Activated naive CD4-positive, alpha-beta T cell treated with anti-CD3 and anti-CD28 coated beads, Interleukin-2, amount 10 ng/mL, durations not matched to agents 7 days and 5 days (primary cell): ENCODE measurements at regions of chr18 and their contacts with region 1.

Region 1: GRCh38 chr18:9082711-9083510 is 19.6 kb upstream of the NDUFV2 start:
- DNase-seq: peak; percentile 61
- H3K4me3 Mint-ChIP-seq: peak overlapping the region; percentile 73
- H3K27ac Mint-ChIP-seq: peak overlapping the region; percentile 99
- H3K4me1 Mint-ChIP-seq: peaks cover 74% of the 10 kb centered on the region
- H3K27me3 Mint-ChIP-seq: no peaks in the 10 kb centered on the region

Region 2: GRCh38 chr18:9095297-9096006 is 12.5 kb after region 1 on chr18:
- CTCF ChIA-PET with region 1: interaction called, 11 read pairs
- DNase-seq: peak; percentile 74
- H3K4me3 Mint-ChIP-seq: peak overlapping the region; percentile 3
- H3K27ac Mint-ChIP-seq: peak overlapping the region; percentile 90
- H3K4me1 Mint-ChIP-seq: peaks cover 65% of the 10 kb centered on the region
- H3K27me3 Mint-ChIP-seq: no peaks in the 10 kb centered on the region

Region 3: DNA sequence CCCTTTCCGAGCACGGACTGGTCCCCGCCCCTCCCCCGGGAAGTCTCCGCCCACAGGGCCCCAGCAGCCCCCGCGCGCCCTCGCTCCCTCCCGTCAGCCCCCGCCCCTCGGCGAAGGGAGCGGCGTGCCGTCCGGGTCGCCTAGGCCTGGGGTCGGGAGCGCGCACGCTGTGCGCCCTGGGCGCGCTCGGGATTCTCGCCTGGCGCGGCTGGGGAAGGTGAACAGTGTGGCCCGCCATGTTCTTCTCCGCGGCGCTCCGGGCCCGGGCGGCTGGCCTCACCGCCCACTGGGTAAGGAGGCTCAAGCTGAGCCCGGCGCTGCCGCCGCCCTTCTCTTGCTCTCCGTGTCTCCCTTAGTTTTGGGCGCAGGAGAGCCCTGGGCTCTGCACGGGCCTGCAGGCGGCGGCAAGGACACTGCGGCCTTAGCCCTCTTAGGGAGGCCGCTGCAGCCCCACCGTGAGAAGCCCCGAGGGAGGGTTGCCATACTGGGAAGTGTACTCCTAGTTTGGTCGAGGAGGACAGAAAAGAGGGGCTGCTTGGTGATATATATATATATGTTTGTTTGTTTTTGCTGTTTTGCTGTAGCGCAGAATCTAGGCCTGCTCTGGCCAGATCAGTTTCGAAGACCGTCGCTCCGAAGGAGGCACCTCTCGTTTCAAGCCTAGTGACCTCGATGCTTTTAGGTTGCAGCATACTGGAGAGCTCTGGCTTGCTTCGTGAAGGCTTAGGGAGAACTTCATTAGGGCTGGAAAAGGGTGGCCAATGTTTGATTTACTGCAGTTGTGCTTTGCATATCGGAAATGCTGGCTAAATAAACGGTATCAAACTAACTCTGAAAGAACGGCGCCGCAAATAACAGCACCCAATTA is 19.8 kb after region 1 on chr18 and contains the start of gene NDUFV2:
- CTCF ChIA-PET with region 1: interaction called, 10 read pairs
- DNase-seq: peak; percentile 98
- H3K4me3 Mint-ChIP-seq: peak within 1 kb of the TSS; percentile 85
- H3K27ac Mint-ChIP-seq: peak within 1 kb of the TSS; percentile 94
- H3K4me1 Mint-ChIP-seq: peaks cover 50% of the 10 kb centered on the region
- H3K27me3 Mint-ChIP-seq: no peaks in the 10 kb centered on the region

Region 4: GRCh38 chr18:9117980-9118841 is 35.3 kb after region 1 on chr18:
- CTCF ChIA-PET with region 1: interaction called, 11 read pairs
- DNase-seq: no peak
- H3K4me3 Mint-ChIP-seq: peak overlapping the region; percentile 53
- H3K27ac Mint-ChIP-seq: peak overlapping the region; percentile 100
- H3K4me1 Mint-ChIP-seq: peaks cover 86% of the 10 kb centered on the region
- H3K27me3 Mint-ChIP-seq: no peaks in the 10 kb centered on the region

Region 5: DNA sequence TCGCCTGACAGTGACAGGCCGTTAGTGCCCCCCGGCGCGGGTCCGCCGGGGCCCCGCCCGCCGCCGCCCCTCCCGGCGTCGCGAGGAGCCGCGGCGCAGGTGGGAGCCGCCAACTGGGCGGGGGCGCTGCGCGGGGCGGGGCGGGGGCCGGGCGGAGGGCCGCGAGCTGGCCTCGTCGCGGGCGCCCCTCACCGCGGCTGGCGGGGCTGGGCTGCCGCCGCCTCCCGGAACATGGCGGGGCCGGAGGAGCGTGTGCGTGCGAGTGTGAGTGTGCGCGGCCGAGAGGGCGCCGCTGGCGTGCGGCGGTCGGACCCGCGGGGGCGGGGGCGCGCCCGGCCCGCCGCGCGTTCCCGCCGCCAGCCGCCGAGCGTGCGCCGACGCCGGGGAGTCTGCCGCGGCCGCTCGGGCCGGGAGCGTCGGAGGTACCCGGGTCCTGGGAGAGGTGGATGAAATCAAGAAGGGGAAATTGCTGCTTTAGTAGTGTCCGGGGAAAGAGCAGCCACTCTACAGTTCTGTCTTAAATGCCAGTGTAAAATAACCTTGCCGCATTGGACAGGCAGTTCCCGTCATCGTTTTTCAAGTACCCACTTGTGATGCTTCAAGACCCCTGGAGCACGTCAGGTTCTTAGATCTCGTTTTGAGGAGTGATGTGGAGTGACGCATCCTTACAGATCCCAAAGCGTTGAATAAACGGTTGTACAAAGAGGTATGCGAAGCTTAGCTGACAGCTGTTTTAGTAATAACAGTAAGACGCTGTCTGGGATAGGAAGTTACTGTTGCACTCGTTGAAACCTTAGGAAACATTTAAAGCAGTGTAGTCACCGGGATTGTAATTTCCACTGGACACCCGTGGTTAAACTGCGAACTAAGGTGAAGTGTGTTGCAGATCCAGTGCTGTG is 54.5 kb after region 1 on chr18:
- CTCF ChIA-PET with region 1: interaction called, 10 read pairs
- DNase-seq: peak; percentile 78
- H3K4me3 Mint-ChIP-seq: peak overlapping the region; percentile 96
- H3K27ac Mint-ChIP-seq: peak overlapping the region; percentile 98
- H3K4me1 Mint-ChIP-seq: peaks cover 67% of the 10 kb centered on the region
- H3K27me3 Mint-ChIP-seq: peaks cover 7% of the 10 kb centered on the region